ENCODE measurements at regions of chr16 and their contacts with region 1.

Region 1: DNA sequence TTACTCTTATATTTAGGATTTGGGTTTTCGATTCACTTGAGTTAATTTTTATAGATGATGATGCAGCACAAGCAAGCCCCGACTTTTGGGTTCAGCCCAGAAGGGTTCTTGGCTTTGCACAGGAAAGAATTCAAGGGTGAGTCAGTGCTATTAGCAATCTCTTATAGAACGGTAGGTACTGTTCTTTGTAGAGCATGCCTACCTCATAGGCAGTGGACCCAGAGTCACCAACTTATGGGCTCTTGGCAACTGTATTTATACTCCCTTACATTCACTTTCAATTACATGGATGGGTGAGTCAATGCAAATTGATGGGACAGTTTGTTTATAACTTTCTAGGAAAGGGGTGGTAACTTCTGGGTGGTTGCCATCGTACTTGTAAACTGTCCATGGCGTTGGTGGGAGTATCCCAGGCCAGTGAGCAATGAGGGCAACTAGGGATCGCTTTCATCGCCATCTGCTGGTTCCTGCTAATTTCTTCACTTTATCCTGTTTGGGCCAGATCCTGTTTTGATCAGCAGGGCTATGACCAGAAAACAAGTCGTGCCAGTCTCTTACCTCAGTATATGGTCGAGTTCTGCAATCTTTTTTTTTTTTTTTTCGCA is 362.6 kb downstream of the CNTNAP4 start:
- DNase-seq: no peak
- ATAC-seq: no peak
- H3K4me3 ChIP-seq: no peak overlapping the region
- H3K27ac ChIP-seq: no peak overlapping the region
- H3K4me1 ChIP-seq: no peaks in the 10 kb centered on the region
- H3K27me3 ChIP-seq: no peaks in the 10 kb centered on the region
- CTCF ChIP-seq: peak in 1 of 9 donors; percentile 9

Region 2: GRCh38 chr16:76577003-76577402 is 62.8 kb before region 1 on chr16:
- intact Hi-C with region 1: loop called in 1 of 10 experiments (anchors 10 kb)
- DNase-seq: no peak
- ATAC-seq: no peak
- H3K4me3 ChIP-seq: no peak overlapping the region
- H3K27ac ChIP-seq: no peak overlapping the region
- H3K4me1 ChIP-seq: no peaks in the 10 kb centered on the region
- H3K27me3 ChIP-seq: no peaks in the 10 kb centered on the region
- CTCF ChIP-seq: no peak

Region 3: DNA sequence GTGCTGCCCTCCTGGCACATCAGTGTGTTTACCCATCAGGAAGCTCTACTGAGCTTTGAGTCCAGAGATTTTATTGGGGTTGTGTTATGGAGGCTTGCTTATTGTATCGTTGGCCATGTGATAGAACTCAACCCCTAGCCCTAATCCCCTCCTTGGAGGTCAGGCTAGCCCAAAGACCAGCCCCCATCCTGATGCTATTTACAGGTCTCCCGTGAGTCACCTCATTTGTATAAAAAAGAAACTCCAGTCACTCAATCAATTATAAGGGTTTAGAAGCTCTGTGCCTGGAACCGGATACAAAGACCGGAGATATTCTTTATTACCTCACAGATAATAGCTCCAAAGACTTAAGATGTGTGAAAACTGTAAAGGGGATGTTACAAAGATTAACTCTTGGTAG is 43.3 kb after region 1 on chr16:
- intact Hi-C with region 1: no loop called
- DNase-seq: no peak
- ATAC-seq: no peak
- H3K4me3 ChIP-seq: no peak overlapping the region
- H3K27ac ChIP-seq: no peak overlapping the region
- H3K4me1 ChIP-seq: no peaks in the 10 kb centered on the region
- H3K27me3 ChIP-seq: no peaks in the 10 kb centered on the region
- CTCF ChIP-seq: no peak